Astrocyte of the cerebellum (primary cell): ENCODE measurements at regions of chr6 and their contacts with region 1.

Region 1: DNA sequence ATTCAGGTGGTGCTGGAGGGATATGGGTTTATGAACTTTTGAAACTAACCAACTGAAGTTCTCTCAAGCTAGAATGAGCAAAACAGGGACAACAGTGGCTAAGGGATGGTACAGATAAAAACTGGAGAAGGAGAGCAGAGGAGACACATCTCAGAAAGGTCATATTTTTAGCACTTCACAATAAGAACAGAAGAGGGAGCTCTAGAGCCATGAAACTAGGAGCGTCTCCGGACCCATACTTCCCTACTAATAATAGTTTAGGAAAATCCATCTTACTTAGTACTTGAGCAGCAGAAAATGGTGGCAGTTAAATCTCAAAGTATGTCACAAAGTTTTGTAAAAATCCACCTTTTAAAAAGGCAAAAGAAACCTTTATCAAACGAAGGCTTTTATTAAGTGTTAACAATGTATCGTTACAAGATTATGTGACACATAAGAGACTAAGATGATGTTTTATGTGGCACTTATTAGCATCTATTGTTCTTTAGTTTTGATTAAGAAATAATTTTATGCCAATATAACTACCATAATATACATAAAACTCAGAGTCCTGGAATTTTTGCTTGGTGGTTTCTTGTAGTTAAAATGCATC is 278.6 kb downstream of the TBC1D32 start:
- DNase-seq: peak; percentile 43
- H3K4me3 ChIP-seq: no peak overlapping the region
- CTCF ChIP-seq: peak; percentile 73

Region 2: GRCh38 chr6:121135425-121135824 is 79.8 kb after region 1 on chr6:
- in situ Hi-C with region 1: no loop called
- DNase-seq: no peak
- H3K4me3 ChIP-seq: no peak overlapping the region
- CTCF ChIP-seq: no peak

Region 3: DNA sequence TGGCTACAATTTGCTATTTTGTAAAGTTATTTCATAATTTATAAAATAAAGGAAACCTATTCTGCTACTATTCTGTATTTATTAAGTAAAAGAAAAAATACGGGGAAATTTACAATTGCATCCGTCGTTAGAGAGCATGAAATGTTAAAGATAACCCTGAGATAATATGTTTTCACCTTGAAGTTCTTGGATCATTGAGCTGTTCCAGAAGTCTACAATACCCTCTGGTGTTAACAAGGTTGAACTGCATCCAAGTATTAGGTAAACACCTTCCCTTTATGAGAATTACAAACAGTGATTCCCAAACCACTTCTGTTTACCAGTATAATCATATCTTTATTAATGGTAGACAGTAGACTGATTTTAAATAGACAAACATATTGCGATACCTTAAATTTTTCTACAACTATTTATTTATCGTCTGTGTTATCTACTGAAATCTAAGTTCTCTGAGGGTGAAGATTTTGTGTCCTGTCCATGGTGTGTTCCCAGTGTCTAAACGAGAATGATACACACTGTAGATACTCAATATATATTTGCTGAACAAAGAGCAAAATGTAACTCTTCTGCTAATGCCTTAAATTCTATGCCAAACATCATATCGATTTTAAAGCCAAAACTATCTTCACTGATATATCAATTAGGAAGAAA is 250.4 kb after region 1 on chr6:
- in situ Hi-C with region 1: loop called (anchors 25 kb)
- DNase-seq: peak; percentile 16
- H3K4me3 ChIP-seq: no peak overlapping the region
- CTCF ChIP-seq: peak; percentile 40

Region 4: GRCh38 chr6:121491576-121491975 is 435.9 kb after region 1 on chr6:
- in situ Hi-C with region 1: no loop called
- DNase-seq: no peak
- H3K4me3 ChIP-seq: no peak overlapping the region
- CTCF ChIP-seq: no peak